Right ventricle myocardium inferior (tissue), 1 donor: ENCODE measurements at regions of chr10 and their contacts with region 1.

Region 1: GRCh38 chr10:68727146-68727545 is 6.1 kb downstream of the CCAR1 start:
- DNase-seq: no peak
- ATAC-seq: no peak

Region 2: GRCh38 chr10:68759967-68760366 is 32.8 kb after region 1 on chr10:
- intact Hi-C with region 1: loop called (anchors 5 kb)
- DNase-seq: no peak
- ATAC-seq: no peak

Region 3: DNA sequence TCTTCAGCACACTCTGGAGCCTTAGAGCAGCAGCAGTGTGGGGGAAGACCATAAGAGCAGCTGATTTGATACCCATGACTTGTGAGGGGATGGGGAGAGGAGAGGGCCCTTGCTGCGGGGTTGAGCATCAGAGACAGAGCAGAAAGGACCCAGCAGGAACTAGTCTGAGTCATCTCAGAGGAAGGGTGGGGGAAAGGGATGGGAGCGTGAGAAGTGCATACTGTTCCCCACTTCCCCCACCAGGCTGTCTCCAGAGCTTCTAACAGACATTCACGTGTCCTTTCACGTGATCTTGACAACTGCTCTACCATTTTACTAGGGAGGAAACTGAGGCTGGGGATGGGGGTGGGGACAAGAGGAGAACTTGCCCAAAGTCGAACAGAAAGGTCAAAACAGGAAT is 941.6 kb after region 1 on chr10:
- intact Hi-C with region 1: no loop called
- DNase-seq: no peak
- ATAC-seq: no peak